ENCODE measurements at regions of chr12 and their contacts with region 1.

Region 1: DNA sequence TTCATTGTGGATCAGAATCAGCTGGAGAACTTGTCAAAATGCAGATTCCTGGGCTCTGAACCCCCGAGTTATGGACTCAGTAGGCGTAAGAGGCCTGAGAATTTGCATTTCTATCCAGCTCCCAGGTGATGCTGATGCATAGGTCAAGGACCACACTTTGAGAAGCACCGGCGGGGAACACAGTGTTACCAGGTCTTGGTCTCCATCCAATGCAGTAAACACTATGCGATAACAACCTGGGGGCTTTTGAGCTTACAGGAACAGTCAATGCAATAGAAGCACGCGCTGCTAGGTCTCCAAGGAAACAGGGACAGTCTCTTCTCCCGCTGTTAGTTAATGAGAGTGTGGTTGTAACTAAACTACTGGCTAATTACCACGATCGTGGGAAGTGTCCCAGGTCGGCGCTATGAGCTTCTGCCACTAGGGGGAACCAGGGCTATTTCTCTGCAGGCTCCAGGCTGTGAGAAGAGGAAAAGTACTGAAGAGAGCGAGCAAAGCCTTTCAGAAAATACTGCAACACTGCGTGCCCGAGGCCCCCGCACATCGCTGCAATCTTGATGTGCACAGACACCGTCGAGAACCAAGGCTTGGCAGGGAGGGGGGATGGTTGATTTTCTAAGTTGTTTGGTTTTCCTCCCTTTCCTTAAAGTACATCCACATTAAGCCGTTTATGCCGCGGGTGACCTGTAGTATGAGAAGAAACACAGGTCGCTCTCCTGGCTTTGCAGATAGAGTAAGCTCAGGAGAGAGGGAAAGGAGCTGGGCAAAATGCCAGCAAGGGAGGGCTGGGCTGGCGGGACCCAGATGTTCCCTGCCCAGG is 52.0 kb upstream of the KCNA1 start:
- DNase-seq: peak; percentile 34
- ATAC-seq: peak; percentile 90
- H3K4me3 ChIP-seq: no peak overlapping the region
- H3K27ac ChIP-seq: no peak overlapping the region
- H3K4me1 ChIP-seq: peaks cover 34% of the 10 kb centered on the region
- H3K27me3 ChIP-seq: no peaks in the 10 kb centered on the region; a peak in 1 of 4 replicates
- CTCF ChIP-seq: peak; percentile 96; a peak in 5 of 6 replicates
- EP300 ChIP-seq: no peak
- POLR2A ChIP-seq: no peak
- RAD21 ChIP-seq: peak; percentile 93

Region 2: DNA sequence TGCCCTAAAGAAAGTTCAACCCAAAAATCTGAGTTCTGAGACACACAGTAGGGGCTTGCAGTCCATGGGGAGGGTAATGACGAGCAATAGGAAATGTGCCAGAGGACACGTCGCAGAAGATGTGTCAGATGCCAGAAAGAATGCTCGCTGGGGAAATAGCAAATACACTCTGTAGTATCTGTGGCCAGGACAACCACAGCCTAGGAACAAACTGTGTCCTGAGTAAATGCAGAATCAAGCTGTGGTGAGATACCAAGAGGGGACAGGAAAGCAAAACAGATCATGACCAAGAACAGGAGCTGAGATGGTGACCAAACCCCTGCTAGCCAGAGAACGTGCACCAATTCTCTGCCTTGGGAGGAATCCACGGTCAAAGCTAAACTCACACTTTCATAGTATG is 1113.9 kb before region 1 on chr12:
- CTCF ChIA-PET with region 1: no interaction called
- POLR2A ChIA-PET with region 1: no interaction called
- RAD21 ChIA-PET with region 1: no interaction called
- SMC1A ChIA-PET with region 1: no interaction called
- in situ Hi-C with region 1: no loop called
- intact Hi-C with region 1: no loop called
- DNase-seq: peak; percentile 39
- ATAC-seq: no peak; the same call in 2 of the 3 replicates
- H3K4me3 ChIP-seq: no peak overlapping the region
- H3K27ac ChIP-seq: no peak overlapping the region
- H3K4me1 ChIP-seq: no peaks in the 10 kb centered on the region
- H3K27me3 ChIP-seq: no peaks in the 10 kb centered on the region
- CTCF ChIP-seq: no peak
- EP300 ChIP-seq: no peak
- POLR2A ChIP-seq: no peak
- RAD21 ChIP-seq: no peak

Region 3: DNA sequence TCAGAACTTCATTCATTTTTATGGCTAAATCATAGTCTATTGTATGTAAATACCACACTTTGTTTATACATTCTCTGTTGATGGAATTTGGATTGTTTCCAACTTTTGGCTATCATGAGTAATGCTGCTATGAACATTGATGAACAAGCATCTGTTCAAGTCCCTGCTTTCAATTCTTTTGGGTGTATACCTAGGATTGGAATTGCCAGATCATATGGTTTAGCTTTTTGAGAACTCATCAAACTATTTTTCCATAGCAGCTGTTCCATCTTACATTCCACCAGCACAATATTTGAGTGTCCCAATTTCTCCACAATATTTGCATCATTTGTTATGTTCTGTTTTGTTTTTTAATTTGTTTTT is 636.4 kb before region 1 on chr12:
- CTCF ChIA-PET with region 1: no interaction called
- POLR2A ChIA-PET with region 1: no interaction called
- RAD21 ChIA-PET with region 1: no interaction called
- SMC1A ChIA-PET with region 1: no interaction called
- in situ Hi-C with region 1: no loop called
- intact Hi-C with region 1: no loop called
- DNase-seq: no peak
- ATAC-seq: no peak
- H3K4me3 ChIP-seq: no peak overlapping the region
- H3K27ac ChIP-seq: no peak overlapping the region
- H3K4me1 ChIP-seq: peaks cover 23% of the 10 kb centered on the region
- H3K27me3 ChIP-seq: no peaks in the 10 kb centered on the region
- CTCF ChIP-seq: no peak
- EP300 ChIP-seq: no peak
- POLR2A ChIP-seq: no peak
- RAD21 ChIP-seq: no peak

Region 4: GRCh38 chr12:4719821-4720636 is 137.7 kb before region 1 on chr12 and contains the start of gene GALNT8:
- CTCF ChIA-PET with region 1: no interaction called
- POLR2A ChIA-PET with region 1: no interaction called
- RAD21 ChIA-PET with region 1: no interaction called
- SMC1A ChIA-PET with region 1: no interaction called
- in situ Hi-C with region 1: no loop called
- intact Hi-C with region 1: no loop called
- DNase-seq: no peak
- ATAC-seq: no peak
- H3K4me3 ChIP-seq: no peak within 1 kb of the TSS
- H3K27ac ChIP-seq: no peak within 1 kb of the TSS
- H3K4me1 ChIP-seq: no peaks in the 10 kb centered on the region
- H3K27me3 ChIP-seq: peaks cover 0 to 5% of the 10 kb centered on the region in 2 experiments; a peak in 2 of 4 replicates
- CTCF ChIP-seq: no peak
- EP300 ChIP-seq: no peak
- POLR2A ChIP-seq: no peak
- RAD21 ChIP-seq: no peak
- polyA plus RNA-seq, gene GALNT8: 0.16 TPM

Region 5: GRCh38 chr12:4899364-4899763 is 41.7 kb after region 1 on chr12:
- CTCF ChIA-PET with region 1: interaction called, 11 read pairs
- POLR2A ChIA-PET with region 1: interaction called, 3 read pairs
- RAD21 ChIA-PET with region 1: interaction called, 3 read pairs
- SMC1A ChIA-PET with region 1: interaction called, 7 read pairs
- in situ Hi-C with region 1: no loop called
- intact Hi-C with region 1: loop called (anchors 5 kb)
- DNase-seq: no peak
- ATAC-seq: peak; percentile 68
- H3K4me3 ChIP-seq: no peak overlapping the region
- H3K27ac ChIP-seq: no peak overlapping the region
- H3K4me1 ChIP-seq: no peaks in the 10 kb centered on the region
- H3K27me3 ChIP-seq: no peaks in the 10 kb centered on the region
- CTCF ChIP-seq: peak; percentile 44 to 52 (median 46); a peak in 4 of 6 replicates
- EP300 ChIP-seq: no peak
- POLR2A ChIP-seq: no peak
- RAD21 ChIP-seq: peak; percentile 53

Region 6: GRCh38 chr12:4956054-4956453 is 98.4 kb after region 1 on chr12:
- CTCF ChIA-PET with region 1: interaction called, 25 read pairs
- POLR2A ChIA-PET with region 1: no interaction called
- RAD21 ChIA-PET with region 1: interaction called, 7 read pairs
- SMC1A ChIA-PET with region 1: interaction called, 8 read pairs
- in situ Hi-C with region 1: no loop called
- intact Hi-C with region 1: loop called (anchors 5 kb)
- DNase-seq: no peak
- ATAC-seq: no peak
- H3K4me3 ChIP-seq: no peak overlapping the region
- H3K27ac ChIP-seq: no peak overlapping the region
- H3K4me1 ChIP-seq: peaks cover 7% of the 10 kb centered on the region; the same call in 1 of the 2 replicates
- H3K27me3 ChIP-seq: no peaks in the 10 kb centered on the region; a peak in 1 of 4 replicates
- CTCF ChIP-seq: no peak
- EP300 ChIP-seq: no peak
- POLR2A ChIP-seq: no peak
- RAD21 ChIP-seq: no peak

Region 7: GRCh38 chr12:4987076-4987760 is 129.5 kb after region 1 on chr12:
- CTCF ChIA-PET with region 1: interaction called, 70 read pairs
- POLR2A ChIA-PET with region 1: no interaction called
- RAD21 ChIA-PET with region 1: interaction called, 5 read pairs
- SMC1A ChIA-PET with region 1: interaction called, 13 read pairs
- in situ Hi-C with region 1: no loop called
- intact Hi-C with region 1: no loop called
- DNase-seq: no peak
- ATAC-seq: no peak
- H3K4me3 ChIP-seq: no peak overlapping the region
- H3K27ac ChIP-seq: no peak overlapping the region
- H3K4me1 ChIP-seq: peaks cover 4% of the 10 kb centered on the region
- H3K27me3 ChIP-seq: no peaks in the 10 kb centered on the region; a peak in 2 of 4 replicates
- CTCF ChIP-seq: no peak
- EP300 ChIP-seq: no peak
- POLR2A ChIP-seq: no peak
- RAD21 ChIP-seq: no peak

Region 8: DNA sequence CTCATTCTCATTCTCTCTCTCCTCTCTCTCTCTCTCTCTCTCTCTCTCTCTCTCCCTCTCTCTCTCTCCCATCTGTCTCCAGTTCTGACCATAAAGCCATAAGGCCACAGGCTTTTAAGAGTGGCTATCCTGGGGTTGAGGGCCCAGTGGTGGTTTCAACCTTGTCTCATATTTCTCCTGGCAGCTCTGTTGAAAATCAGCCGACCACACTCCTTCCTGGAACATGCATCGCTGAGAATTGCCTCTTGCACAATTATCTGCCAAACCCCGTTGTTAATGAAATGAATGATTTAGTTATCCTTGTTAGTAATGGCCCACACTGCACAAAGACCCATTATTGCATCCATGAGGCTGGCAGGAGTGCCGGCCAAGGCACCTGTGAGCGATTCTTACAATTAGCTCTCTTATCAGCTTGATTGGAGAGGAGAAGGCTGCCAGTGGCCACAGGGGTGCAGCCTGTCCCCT is 155.6 kb after region 1 on chr12:
- CTCF ChIA-PET with region 1: interaction called, 11 read pairs
- POLR2A ChIA-PET with region 1: no interaction called
- RAD21 ChIA-PET with region 1: no interaction called
- SMC1A ChIA-PET with region 1: interaction called, 3 read pairs
- in situ Hi-C with region 1: no loop called
- intact Hi-C with region 1: no loop called
- DNase-seq: no peak
- ATAC-seq: no peak
- H3K4me3 ChIP-seq: no peak overlapping the region
- H3K27ac ChIP-seq: no peak overlapping the region
- H3K4me1 ChIP-seq: peaks cover 4% of the 10 kb centered on the region; the same call in 1 of the 2 replicates
- H3K27me3 ChIP-seq: peaks cover 0 to 1% of the 10 kb centered on the region in 2 experiments; a peak in 1 of 4 replicates
- CTCF ChIP-seq: no peak
- EP300 ChIP-seq: no peak
- POLR2A ChIP-seq: no peak
- RAD21 ChIP-seq: no peak